Mammary epithelial cell (primary cell): ENCODE measurements at regions of chr4 and their contacts with region 1.

Region 1: GRCh38 chr4:13920901-13921300 is 293.4 kb upstream of the BOD1L1 start:
- DNase-seq: peak; percentile 100
- H3K4me3 ChIP-seq: no peak overlapping the region
- H3K27ac ChIP-seq: peak overlapping the region; percentile 100
- H3K4me1 ChIP-seq: peaks cover 52% of the 10 kb centered on the region
- H3K27me3 ChIP-seq: no peaks in the 10 kb centered on the region
- CTCF ChIP-seq: no peak

Region 2: DNA sequence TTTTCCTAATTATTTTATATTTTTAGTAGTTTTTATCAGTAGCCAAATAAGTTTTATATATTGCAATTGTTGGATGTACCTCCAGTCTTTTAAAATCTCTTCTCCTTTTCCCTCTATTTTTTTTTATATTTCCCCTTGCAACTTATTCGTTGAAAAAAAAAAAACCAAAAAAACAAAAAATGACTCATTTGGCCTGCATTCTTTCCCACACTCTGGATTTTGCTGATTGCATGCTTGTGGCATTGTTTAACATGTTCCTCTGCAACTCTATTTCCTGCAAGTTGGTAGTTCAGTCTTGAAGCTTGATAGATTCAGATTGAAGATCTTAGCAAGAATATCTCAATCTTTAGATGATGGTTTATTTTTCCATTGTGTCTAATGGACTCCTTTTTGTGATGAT is 32.8 kb before region 1 on chr4:
- CTCF ChIA-PET with region 1: no interaction called
- dilution Hi-C with region 1: no loop called
- in situ Hi-C with region 1: no loop called
- intact Hi-C with region 1: loop called (anchors 1 kb)
- DNase-seq: peak; percentile 76
- H3K4me3 ChIP-seq: no peak overlapping the region
- H3K27ac ChIP-seq: no peak overlapping the region
- H3K4me1 ChIP-seq: peaks cover 27% of the 10 kb centered on the region
- H3K27me3 ChIP-seq: no peaks in the 10 kb centered on the region
- CTCF ChIP-seq: no peak

Region 3: DNA sequence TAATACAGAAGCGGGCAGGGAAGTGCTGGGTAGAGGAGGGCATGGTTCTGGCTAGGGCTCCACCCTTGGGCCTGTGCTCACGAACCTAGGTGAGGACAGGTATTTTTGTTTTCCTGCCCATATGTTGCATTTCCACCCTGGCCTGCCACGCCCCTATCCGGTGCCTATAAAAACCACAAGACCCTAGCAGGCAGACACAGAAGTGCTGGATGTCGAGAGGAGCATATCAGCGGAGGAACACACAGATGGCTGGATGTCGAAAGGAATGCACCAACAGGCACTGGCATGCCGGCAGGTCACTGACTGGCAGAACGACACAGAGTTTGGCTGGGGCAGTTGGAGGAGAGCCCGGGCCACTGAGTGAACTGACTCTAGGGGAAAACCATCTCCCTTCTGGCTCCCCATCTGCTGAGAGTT is 23.2 kb after region 1 on chr4:
- CTCF ChIA-PET with region 1: no interaction called
- dilution Hi-C with region 1: no loop called
- in situ Hi-C with region 1: no loop called
- intact Hi-C with region 1: loop called (anchors 1 kb)
- DNase-seq: peak; percentile 96
- H3K4me3 ChIP-seq: no peak overlapping the region
- H3K27ac ChIP-seq: no peak overlapping the region
- H3K4me1 ChIP-seq: peaks cover 15% of the 10 kb centered on the region
- H3K27me3 ChIP-seq: no peaks in the 10 kb centered on the region
- CTCF ChIP-seq: no peak

Region 4: DNA sequence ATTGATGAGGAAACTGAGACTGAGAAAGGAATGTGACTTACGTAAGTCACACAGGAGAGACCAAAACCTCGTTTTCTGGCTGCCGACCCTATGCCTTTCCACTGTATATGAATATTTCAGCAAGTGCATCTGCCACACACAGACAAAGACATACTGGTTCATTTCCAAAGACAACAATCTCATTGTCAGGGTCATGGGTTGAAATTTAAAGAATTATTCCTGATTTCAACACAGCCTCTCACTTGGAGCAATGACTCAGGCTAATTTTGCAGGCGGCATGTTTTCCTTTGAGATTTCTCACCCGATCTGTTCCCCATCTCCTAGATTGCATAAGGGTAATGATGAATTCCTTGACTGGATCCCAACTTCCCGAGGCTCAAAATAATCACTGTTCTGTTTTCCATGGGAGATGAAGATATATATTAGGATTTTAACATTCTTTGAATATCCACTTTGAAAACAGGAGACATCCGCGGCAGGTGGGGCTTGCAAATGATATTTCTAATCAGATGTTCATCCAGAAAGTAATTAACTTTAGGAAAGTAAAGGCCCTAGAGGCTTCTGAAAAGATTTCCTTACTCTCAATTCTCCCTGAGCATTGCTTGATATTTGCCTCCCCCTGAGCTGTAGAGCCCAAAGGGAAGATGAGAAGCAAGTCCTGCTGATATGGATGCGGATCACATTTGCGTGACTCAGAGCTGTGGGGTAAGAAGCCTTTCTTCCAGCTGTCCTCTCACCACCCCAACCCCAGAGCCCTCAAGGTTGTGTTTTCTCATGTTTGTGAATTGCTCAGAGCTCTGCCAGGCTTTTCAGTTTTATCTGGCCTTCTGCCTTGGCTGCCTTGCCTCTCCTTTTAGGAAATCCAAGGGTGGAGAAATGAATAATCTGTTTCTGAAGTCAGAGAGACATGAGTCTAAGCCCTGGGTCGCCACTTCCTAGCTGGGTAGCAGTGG is 67.7 kb after region 1 on chr4:
- CTCF ChIA-PET with region 1: no interaction called
- dilution Hi-C with region 1: loop called (anchors 5 kb)
- in situ Hi-C with region 1: no loop called
- intact Hi-C with region 1: loop called (anchors 5 kb)
- DNase-seq: peak; percentile 94
- H3K4me3 ChIP-seq: no peak overlapping the region
- H3K27ac ChIP-seq: peak overlapping the region; percentile 79
- H3K4me1 ChIP-seq: peaks cover 36% of the 10 kb centered on the region
- H3K27me3 ChIP-seq: peaks cover 3% of the 10 kb centered on the region
- CTCF ChIP-seq: no peak

Region 5: GRCh38 chr4:14294611-14295010 is 373.7 kb after region 1 on chr4:
- CTCF ChIA-PET with region 1: no interaction called
- dilution Hi-C with region 1: no loop called
- in situ Hi-C with region 1: no loop called
- intact Hi-C with region 1: loop called (anchors 5 kb)
- DNase-seq: no peak
- H3K4me3 ChIP-seq: no peak overlapping the region
- H3K27ac ChIP-seq: no peak overlapping the region
- H3K4me1 ChIP-seq: peaks cover 6% of the 10 kb centered on the region
- H3K27me3 ChIP-seq: no peaks in the 10 kb centered on the region
- CTCF ChIP-seq: no peak